Gastrocnemius medialis (tissue), 4 donors: ENCODE measurements at regions of chr7 and their contacts with region 1.

Region 1: GRCh38 chr7:74429153-74429747 is 24.5 kb upstream of the GTF2IRD1 start:
- DNase-seq: no peak
- ATAC-seq: peak; percentile 34 to 60
- H3K4me3 ChIP-seq: no peak overlapping the region
- H3K27ac ChIP-seq: peak overlapping the region in 2 of 4 donors; percentile 85 to 88
- H3K4me1 ChIP-seq: peaks cover 3 to 25% of the 10 kb centered on the region in 2 donors
- H3K27me3 ChIP-seq: no peaks in the 10 kb centered on the region
- CTCF ChIP-seq: no peak
- POLR2A ChIP-seq: peak in 1 of 2 donors; percentile 10

Region 2: DNA sequence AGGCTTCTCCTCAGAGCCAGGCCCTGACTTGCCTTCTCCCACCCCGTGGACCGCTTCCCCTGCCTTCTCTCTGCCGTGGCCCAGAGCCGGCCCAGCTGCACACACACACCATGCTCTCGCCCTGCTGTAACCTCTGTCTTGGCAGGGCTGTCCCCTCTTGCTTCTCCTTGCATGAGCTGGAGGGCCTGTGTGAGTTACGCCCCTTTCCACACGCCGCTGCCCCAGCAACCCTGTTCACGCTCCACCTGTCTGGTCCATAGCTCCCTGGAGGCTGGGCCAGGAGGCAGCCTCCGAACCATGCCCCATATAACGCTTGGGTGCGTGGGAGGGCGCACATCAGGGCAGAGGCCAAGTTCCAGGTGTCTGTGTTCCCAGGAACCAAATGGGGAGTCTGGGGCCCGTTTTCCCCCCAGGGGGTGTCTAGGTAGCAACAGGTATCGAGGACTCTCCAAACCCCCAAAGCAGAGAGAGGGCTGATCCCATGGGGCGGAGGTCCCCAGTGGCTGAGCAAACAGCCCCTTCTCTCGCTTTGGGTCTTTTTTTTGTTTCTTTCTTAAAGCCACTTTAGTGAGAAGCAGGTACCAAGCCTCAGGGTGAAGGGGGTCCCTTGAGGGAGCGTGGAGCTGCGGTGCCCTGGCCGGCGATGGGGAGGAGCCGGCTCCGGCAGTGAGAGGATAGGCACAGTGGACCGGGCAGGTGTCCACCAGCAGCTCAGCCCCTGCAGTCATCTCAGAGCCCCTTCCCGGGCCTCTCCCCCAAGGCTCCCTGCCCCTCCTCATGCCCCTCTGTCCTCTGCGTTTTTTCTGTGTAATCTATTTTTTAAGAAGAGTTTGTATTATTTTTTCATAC is 307.6 kb before region 1 on chr7:
- in situ Hi-C with region 1: no loop called
- intact Hi-C with region 1: no loop called
- DNase-seq: no peak
- ATAC-seq: no peak
- H3K4me3 ChIP-seq: no peak overlapping the region
- H3K27ac ChIP-seq: no peak overlapping the region
- H3K4me1 ChIP-seq: no peaks in the 10 kb centered on the region
- H3K27me3 ChIP-seq: no peaks in the 10 kb centered on the region
- CTCF ChIP-seq: no peak
- POLR2A ChIP-seq: no peak

Region 3: GRCh38 chr7:74417419-74417971 is 11.8 kb before region 1 on chr7:
- in situ Hi-C with region 1: no loop called
- intact Hi-C with region 1: no loop called
- DNase-seq: peak; percentile 46 to 69
- ATAC-seq: peak; percentile 87 to 93
- H3K4me3 ChIP-seq: no peak overlapping the region
- H3K27ac ChIP-seq: peak overlapping the region in 1 of 4 donors; percentile 48
- H3K4me1 ChIP-seq: peaks cover 4 to 9% of the 10 kb centered on the region in 2 donors
- H3K27me3 ChIP-seq: no peaks in the 10 kb centered on the region
- CTCF ChIP-seq: peak; percentile 97 to 98 (median 97)
- POLR2A ChIP-seq: no peak

Region 4: GRCh38 chr7:74554178-74554577 is 124.9 kb after region 1 on chr7:
- in situ Hi-C with region 1: loop called in 1 of 4 experiments (anchors 25 kb)
- intact Hi-C with region 1: loop called (anchors 5 kb)
- DNase-seq: no peak
- ATAC-seq: peak; percentile 14 to 55
- H3K4me3 ChIP-seq: no peak overlapping the region
- H3K27ac ChIP-seq: peak overlapping the region; percentile 89 to 90 (median 89)
- H3K4me1 ChIP-seq: peaks cover 12 to 15% of the 10 kb centered on the region in 2 donors
- H3K27me3 ChIP-seq: no peaks in the 10 kb centered on the region
- CTCF ChIP-seq: no peak
- POLR2A ChIP-seq: no peak

Region 5: GRCh38 chr7:74569501-74570075 is 140.3 kb after region 1 on chr7:
- in situ Hi-C with region 1: loop called in 2 of 4 experiments (anchors 10 kb)
- intact Hi-C with region 1: no loop called
- DNase-seq: no peak
- ATAC-seq: no peak
- H3K4me3 ChIP-seq: no peak overlapping the region
- H3K27ac ChIP-seq: peak overlapping the region in 3 of 4 donors; percentile 27 to 54 (median 45)
- H3K4me1 ChIP-seq: no peaks in the 10 kb centered on the region
- H3K27me3 ChIP-seq: no peaks in the 10 kb centered on the region
- CTCF ChIP-seq: no peak
- POLR2A ChIP-seq: no peak